Common myeloid progenitor, CD34-positive (primary cell): ENCODE measurements at regions of chr4 and their contacts with region 1.

Region 1: GRCh38 chr4:153634738-153635353 is 49.2 kb upstream of the TLR2 start:
- DNase-seq: peak; percentile 33 to 48 (median 39)
- H3K4me3 ChIP-seq: no peak overlapping the region
- H3K27ac ChIP-seq: no peak overlapping the region
- H3K4me1 ChIP-seq: no peaks in the 10 kb centered on the region
- H3K27me3 ChIP-seq: no peaks in the 10 kb centered on the region

Region 2: DNA sequence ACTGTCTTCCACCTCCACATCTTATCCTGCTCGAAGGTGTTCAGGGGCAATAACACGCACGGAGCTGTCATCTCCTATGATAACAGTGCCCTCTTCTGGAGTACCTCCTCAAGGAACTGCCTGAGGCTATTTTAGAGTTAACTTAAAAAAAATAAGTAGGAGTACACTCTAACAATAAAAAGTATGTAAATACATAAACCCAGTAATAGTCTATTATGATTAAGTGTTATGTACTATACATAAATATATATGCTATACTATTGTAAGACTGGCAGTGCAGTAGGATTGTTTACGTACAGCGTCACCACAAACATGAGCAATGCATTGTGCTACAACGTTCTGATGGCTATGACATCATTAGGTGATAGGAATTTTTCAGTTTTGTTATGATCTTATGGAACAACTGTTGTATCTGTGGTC is 14.7 kb after region 1 on chr4:
- CTCF ChIA-PET with region 1: interaction called, 16 read pairs
- POLR2A ChIA-PET with region 1: no interaction called
- DNase-seq: no peak
- H3K4me3 ChIP-seq: no peak overlapping the region
- H3K27ac ChIP-seq: no peak overlapping the region
- H3K4me1 ChIP-seq: peaks cover 0 to 24% (median 7%) of the 10 kb centered on the region in 4 experiments
- H3K27me3 ChIP-seq: no peaks in the 10 kb centered on the region

Region 3: GRCh38 chr4:153750197-153750817 is 115.5 kb after region 1 on chr4:
- CTCF ChIA-PET with region 1: interaction called, 56 read pairs
- POLR2A ChIA-PET with region 1: no interaction called
- DNase-seq: peak; percentile 65 to 83 (median 80)
- H3K4me3 ChIP-seq: no peak overlapping the region
- H3K27ac ChIP-seq: no peak overlapping the region
- H3K4me1 ChIP-seq: peaks cover 0 to 6% (median 2%) of the 10 kb centered on the region in 4 experiments
- H3K27me3 ChIP-seq: peaks cover 0 to 3% (median 0%) of the 10 kb centered on the region in 5 experiments